ENCODE measurements at regions of chr18 and their contacts with region 1.

Region 1: DNA sequence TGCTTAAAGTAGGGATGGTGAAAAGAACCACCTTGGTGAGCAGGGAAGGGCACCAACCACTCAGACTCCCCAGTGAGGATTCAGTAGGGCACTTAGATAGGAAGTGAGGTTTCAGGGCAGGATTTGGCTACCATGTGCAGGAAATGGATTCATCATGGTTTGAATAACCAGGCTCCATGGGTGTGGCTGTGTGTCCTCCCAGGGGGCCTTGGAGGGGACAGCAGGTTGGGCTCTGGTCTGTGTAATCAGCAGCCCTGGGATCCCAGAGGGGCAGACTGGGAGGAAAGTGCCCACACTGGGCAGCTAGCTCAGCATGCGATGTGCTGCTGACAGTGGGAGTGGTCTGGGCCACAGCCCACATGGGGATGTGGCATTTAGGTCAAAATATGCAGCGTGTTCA is 224.6 kb downstream of the CELF4 start:
- DNase-seq: no peak
- H3K4me3 ChIP-seq: no peak overlapping the region
- H3K27ac ChIP-seq: no peak overlapping the region; a peak in 1 of 4 replicates
- H3K4me1 ChIP-seq: peaks cover 0 to 9% of the 10 kb centered on the region in 2 experiments; a peak in 1 of 4 replicates
- H3K27me3 ChIP-seq: no peaks in the 10 kb centered on the region
- CTCF ChIP-seq: no peak
- EP300 ChIP-seq: no peak
- RAD21 ChIP-seq: no peak

Region 2: DNA sequence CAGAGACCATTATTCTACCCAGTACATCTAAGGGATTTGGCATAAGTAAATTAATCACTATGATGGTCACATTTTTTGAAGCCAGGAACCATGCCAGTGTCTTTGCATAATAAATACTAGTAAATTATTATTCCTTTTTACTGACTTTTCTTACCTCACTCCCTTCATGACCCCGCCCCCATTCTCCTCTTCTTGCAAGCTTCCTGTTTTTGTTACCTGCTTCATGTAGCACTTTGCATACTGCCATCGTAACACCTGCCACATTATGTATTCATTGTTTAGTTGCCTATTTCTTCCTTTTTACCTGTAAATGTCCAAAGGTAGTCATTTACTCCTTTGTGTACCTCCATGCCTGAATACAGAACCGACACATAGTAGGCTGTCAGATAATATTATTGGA is 202.6 kb before region 1 on chr18:
- CTCF ChIA-PET with region 1: no interaction called
- POLR2A ChIA-PET with region 1: no interaction called
- DNase-seq: no peak
- H3K4me3 ChIP-seq: no peak overlapping the region
- H3K27ac ChIP-seq: no peak overlapping the region
- H3K4me1 ChIP-seq: no peaks in the 10 kb centered on the region
- H3K27me3 ChIP-seq: no peaks in the 10 kb centered on the region
- CTCF ChIP-seq: no peak
- EP300 ChIP-seq: no peak
- RAD21 ChIP-seq: no peak

Region 3: DNA sequence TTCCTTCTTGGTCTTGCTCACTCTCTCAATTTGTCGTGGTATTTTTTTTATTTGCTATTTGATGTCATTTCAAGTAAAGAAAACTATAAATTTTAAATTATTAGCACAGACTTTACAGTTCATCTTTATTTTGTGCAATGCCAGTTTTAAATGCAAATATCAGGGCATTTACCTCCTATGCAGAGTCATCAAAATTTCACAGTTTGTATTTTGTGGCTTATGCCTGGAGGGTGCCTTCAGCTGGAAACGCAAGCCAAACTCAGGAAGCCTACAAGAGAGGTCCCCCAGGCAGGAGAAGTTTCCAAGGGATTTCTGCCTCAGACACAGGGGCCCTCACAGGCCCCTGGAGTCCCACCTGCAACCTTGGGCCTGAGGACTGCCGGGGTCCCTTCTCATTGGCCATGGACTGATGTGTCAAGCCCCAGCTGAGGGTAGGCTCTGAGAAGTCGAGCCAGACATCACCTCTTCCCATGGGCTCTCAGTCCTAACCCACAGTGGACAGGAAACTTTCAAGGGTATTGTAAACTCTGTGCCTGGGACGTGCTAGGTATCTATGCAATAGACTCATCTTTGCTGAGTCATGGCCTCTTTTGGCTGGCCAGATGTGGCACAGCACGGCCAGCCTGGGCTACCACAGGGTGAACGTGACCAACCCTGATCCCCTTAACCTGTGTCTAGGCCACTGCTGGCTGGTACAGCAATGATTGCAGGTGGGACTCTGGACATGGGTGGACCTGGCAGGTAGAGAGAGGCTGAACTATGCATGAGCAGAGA is 11.9 kb before region 1 on chr18:
- CTCF ChIA-PET with region 1: interaction called, 66 read pairs
- POLR2A ChIA-PET with region 1: no interaction called
- DNase-seq: no peak
- H3K4me3 ChIP-seq: no peak overlapping the region
- H3K27ac ChIP-seq: no peak overlapping the region
- H3K4me1 ChIP-seq: peaks cover 1 to 52% of the 10 kb centered on the region in 2 experiments; a peak in 1 of 4 replicates
- H3K27me3 ChIP-seq: no peaks in the 10 kb centered on the region
- CTCF ChIP-seq: no peak
- EP300 ChIP-seq: no peak
- RAD21 ChIP-seq: no peak

Region 4: DNA sequence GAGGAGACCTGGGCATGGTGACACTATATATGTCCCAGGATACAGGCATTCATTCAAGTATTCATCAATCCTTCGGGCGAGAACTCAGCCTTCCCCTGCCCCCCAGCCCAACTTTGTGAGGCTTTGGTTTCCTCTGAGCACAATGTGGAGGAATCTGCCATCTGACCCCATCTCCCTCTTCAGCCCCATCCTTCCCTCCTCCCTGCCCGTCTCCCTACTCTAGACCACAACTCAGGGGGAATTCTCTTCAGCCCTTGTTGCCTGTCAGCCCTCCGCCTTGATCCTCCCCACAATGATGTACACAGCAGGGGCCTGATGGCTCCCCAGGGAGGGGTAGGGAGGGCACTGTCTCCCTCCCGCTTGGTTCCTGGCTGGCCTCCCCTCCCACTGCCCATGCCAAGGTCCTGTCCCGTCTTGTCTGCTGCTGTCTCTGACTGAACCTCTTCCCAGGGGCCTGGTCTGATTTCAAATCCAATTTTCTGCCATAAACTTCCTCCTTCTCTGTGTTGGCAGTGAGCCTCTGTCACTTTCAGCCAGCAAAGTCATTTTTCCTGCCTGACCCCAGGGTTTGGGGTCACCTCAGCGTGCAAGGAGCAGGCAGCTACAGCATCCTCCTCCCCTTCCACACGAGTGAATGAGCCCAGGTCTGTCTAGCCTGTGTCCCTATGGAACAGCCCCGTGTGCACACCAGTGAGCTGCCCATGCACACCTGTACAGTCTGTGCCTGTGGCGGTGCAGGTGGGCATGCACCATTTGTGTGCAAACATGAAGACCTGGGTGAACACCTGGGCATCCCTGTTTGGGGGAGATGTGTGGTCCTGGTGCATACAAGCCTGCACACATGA is 27.3 kb after region 1 on chr18:
- CTCF ChIA-PET with region 1: interaction called, 13 read pairs
- POLR2A ChIA-PET with region 1: no interaction called
- DNase-seq: peak; percentile 62
- H3K4me3 ChIP-seq: no peak overlapping the region
- H3K27ac ChIP-seq: peak overlapping the region in 1 of 2 experiments; percentile 69; a peak in 2 of 4 replicates
- H3K4me1 ChIP-seq: peaks cover 0 to 48% of the 10 kb centered on the region in 2 experiments; a peak in 1 of 4 replicates
- H3K27me3 ChIP-seq: no peaks in the 10 kb centered on the region
- CTCF ChIP-seq: no peak
- EP300 ChIP-seq: peak in 1 of 2 experiments; percentile 50; a peak in 2 of 4 replicates
- RAD21 ChIP-seq: no peak

Region 5: GRCh38 chr18:37385846-37386778 is 45.1 kb after region 1 on chr18:
- CTCF ChIA-PET with region 1: interaction called, 18 read pairs
- POLR2A ChIA-PET with region 1: no interaction called
- DNase-seq: peak; percentile 52
- H3K4me3 ChIP-seq: no peak overlapping the region; a peak in 1 of 4 replicates
- H3K27ac ChIP-seq: no peak overlapping the region
- H3K4me1 ChIP-seq: peaks cover 0 to 26% of the 10 kb centered on the region in 2 experiments; a peak in 1 of 4 replicates
- H3K27me3 ChIP-seq: no peaks in the 10 kb centered on the region
- CTCF ChIP-seq: peak; percentile 72
- EP300 ChIP-seq: no peak
- RAD21 ChIP-seq: peak; percentile 79

Region 6: GRCh38 chr18:37537868-37538525 is 197.0 kb after region 1 on chr18:
- CTCF ChIA-PET with region 1: interaction called, 18 read pairs
- POLR2A ChIA-PET with region 1: no interaction called
- DNase-seq: peak; percentile 91
- H3K4me3 ChIP-seq: no peak overlapping the region; a peak in 1 of 4 replicates
- H3K27ac ChIP-seq: no peak overlapping the region
- H3K4me1 ChIP-seq: peaks cover 0 to 52% of the 10 kb centered on the region in 2 experiments; a peak in 2 of 4 replicates
- H3K27me3 ChIP-seq: no peaks in the 10 kb centered on the region
- CTCF ChIP-seq: peak; percentile 78
- EP300 ChIP-seq: no peak
- RAD21 ChIP-seq: peak; percentile 93